Right lobe of liver (tissue), 6 donors: ENCODE measurements at regions of chr22 and their contacts with region 1.

Region 1: GRCh38 chr22:34105461-34106062 is 185.3 kb upstream of the LARGE1 start:
- DNase-seq: peak; percentile 62 to 70 (median 67)
- ATAC-seq: peak; percentile 96 to 99 (median 96)
- H3K4me3 ChIP-seq: no peak overlapping the region
- H3K27ac ChIP-seq: no peak overlapping the region
- H3K4me1 ChIP-seq: no peaks in the 10 kb centered on the region
- H3K27me3 ChIP-seq: no peaks in the 10 kb centered on the region
- CTCF ChIP-seq: peak; percentile 65 to 74 (median 74)
- POLR2A ChIP-seq: no peak

Region 2: GRCh38 chr22:33867115-33867866 is 238.3 kb before region 1 on chr22:
- intact Hi-C with region 1: no loop called
- DNase-seq: peak in 1 of 3 donors; percentile 36
- ATAC-seq: peak in 3 of 4 donors; percentile 63 to 79 (median 66)
- H3K4me3 ChIP-seq: no peak overlapping the region
- H3K27ac ChIP-seq: peak overlapping the region in 2 of 3 donors; percentile 43 to 57
- H3K4me1 ChIP-seq: peaks cover 0 to 19% (median 8%) of the 10 kb centered on the region in 4 donors
- H3K27me3 ChIP-seq: no peaks in the 10 kb centered on the region
- CTCF ChIP-seq: peak in 1 of 4 donors; percentile 7
- POLR2A ChIP-seq: no peak

Region 3: GRCh38 chr22:33932997-33933396 is 172.6 kb before region 1 on chr22:
- intact Hi-C with region 1: loop called in 1 of 2 experiments (anchors 10 kb)
- DNase-seq: no peak
- ATAC-seq: no peak
- H3K4me3 ChIP-seq: no peak overlapping the region
- H3K27ac ChIP-seq: no peak overlapping the region
- H3K4me1 ChIP-seq: no peaks in the 10 kb centered on the region
- H3K27me3 ChIP-seq: no peaks in the 10 kb centered on the region
- CTCF ChIP-seq: no peak
- POLR2A ChIP-seq: no peak